H1 (cell line): ENCODE measurements at regions of chrX and their contacts with region 1.

Region 1: DNA sequence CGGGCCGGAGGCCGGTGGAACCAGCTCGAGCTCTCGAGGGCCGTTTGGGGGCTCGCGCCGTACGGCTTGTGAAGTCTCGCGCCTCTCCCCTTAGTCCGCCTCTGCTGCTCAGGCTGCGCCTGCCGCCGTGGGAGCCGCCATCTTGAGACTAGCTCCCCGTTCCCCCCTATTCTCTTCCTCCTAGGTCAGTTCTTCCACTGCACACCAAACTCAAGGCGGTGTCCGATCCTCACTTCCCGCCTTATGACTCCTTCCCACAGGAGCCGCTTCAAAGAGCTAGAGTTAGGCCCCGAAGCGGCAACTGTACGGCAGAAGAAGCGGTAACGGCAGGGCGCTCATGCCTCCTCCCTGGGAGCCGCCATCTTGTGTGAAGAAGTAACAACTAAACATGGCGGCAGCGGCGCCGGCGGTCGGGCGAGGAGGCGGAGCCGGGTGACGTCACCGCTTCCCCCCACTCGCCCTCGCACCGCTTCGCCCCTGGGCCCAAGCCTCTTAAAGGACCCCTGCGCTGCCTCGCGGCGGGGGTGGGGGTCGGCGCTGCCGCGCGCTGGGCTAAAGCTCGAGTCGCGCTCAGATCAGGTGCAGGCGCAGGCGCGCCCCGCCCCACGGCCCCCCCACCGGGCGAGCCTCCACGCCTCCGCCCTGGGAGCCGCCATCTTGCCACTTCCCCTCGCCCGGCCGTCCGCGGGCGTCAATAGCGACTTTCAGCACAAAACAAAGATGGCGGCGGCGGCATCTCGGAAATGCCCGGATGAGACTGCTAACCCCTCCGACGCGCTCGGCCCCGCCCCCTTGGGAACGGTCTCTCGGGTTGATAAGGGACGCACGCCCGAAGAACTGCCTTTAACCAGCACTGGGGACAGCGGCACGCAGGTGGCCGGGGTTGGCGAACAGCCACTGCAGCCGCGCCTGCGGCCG is at the start of gene HCFC1:
- DNase-seq: peak in 1 of 2 experiments; percentile 86
- H3K4me3 ChIP-seq: peak within 1 kb of the TSS; percentile 92 to 99 (median 95)
- H3K27ac ChIP-seq: peak within 1 kb of the TSS; percentile 99
- H3K4me1 ChIP-seq: peaks cover 4 to 24% (median 12%) of the 10 kb centered on the region in 4 experiments
- H3K27me3 ChIP-seq: no peaks in the 10 kb centered on the region
- CTCF ChIP-seq: no peak
- EP300 ChIP-seq: 0 out of 3 replicates have a peak, but pooled peaks of 1 of the 2 experiments have one; percentile 43
- POLR2A ChIP-seq: peak in 1 of 2 experiments; percentile 64; a peak in 2 of 3 replicates
- RAD21 ChIP-seq: no peak
- total RNA-seq, gene HCFC1: 117 and 120 TPM in 2 replicates

Region 2: DNA sequence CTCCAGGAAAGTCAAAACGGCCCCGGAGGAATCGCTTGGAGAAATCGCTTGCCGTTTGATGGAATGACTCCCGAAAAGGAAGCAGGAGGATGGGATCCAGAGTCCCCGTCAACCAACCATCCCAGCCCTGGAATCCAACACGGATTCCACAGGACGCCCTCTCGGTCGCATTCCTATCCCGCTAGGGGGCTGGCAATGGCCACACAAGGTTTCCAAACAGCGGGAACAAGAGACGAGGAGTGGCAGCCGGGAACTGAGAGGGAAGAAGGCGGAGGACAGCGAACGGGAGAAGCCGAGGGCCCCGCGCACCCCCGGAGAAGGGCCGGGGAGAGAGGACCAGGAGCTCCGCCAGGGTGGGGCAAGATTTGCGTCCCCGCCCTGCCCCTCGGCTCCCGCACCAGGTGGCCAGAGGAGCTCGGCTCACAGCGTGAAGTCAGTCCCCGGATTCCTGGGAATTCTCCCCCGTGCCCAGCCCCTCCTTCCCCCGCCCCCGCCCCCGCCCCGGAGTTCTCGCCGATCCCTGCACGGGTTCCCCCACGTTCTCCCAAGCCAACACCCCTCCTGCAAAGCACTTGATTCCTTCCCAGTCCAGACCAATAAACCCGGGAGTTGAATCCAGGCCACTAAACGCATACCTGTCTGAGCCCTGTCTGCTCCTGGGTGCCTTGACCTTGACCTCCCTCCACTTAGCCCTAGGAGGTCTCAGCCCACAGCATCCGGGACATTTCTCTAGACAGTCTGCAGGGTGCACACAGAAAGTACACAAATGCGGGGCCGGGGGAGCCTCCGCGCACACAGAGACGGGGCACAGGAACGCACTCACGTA is 142.8 kb before region 1 on chrX:
- CTCF ChIA-PET with region 1: no interaction called
- POLR2A ChIA-PET with region 1: no interaction called
- DNase-seq: peak in 1 of 2 experiments; percentile 69
- H3K4me3 ChIP-seq: peak overlapping the region; percentile 52 to 78 (median 58)
- H3K27ac ChIP-seq: peak overlapping the region; percentile 29; the same call in 1 of the 2 replicates
- H3K4me1 ChIP-seq: peaks cover 6 to 22% (median 15%) of the 10 kb centered on the region in 4 experiments; a peak in 6 of 7 replicates
- H3K27me3 ChIP-seq: peaks cover 0 to 6% (median 2%) of the 10 kb centered on the region in 4 experiments; a peak in 3 of 7 replicates
- CTCF ChIP-seq: no peak
- EP300 ChIP-seq: no peak
- POLR2A ChIP-seq: no peak
- RAD21 ChIP-seq: no peak

Region 3: GRCh38 chrX:153934473-153935325 is 37.0 kb before region 1 on chrX and contains the start of gene NAA10:
- CTCF ChIA-PET with region 1: interaction called, 3 read pairs
- POLR2A ChIA-PET with region 1: interaction called, 43 read pairs
- DNase-seq: peak in 1 of 2 experiments; percentile 63
- H3K4me3 ChIP-seq: peak within 1 kb of the TSS; percentile 57 to 87 (median 66)
- H3K27ac ChIP-seq: no peak within 1 kb of the TSS
- H3K4me1 ChIP-seq: peaks cover 0 to 5% (median 4%) of the 10 kb centered on the region in 4 experiments; a peak in 5 of 7 replicates
- H3K27me3 ChIP-seq: no peaks in the 10 kb centered on the region
- CTCF ChIP-seq: no peak
- EP300 ChIP-seq: no peak
- POLR2A ChIP-seq: no peak
- RAD21 ChIP-seq: no peak
- total RNA-seq, gene NAA10: 98.1 and 98.8 TPM in 2 replicates

Region 4: DNA sequence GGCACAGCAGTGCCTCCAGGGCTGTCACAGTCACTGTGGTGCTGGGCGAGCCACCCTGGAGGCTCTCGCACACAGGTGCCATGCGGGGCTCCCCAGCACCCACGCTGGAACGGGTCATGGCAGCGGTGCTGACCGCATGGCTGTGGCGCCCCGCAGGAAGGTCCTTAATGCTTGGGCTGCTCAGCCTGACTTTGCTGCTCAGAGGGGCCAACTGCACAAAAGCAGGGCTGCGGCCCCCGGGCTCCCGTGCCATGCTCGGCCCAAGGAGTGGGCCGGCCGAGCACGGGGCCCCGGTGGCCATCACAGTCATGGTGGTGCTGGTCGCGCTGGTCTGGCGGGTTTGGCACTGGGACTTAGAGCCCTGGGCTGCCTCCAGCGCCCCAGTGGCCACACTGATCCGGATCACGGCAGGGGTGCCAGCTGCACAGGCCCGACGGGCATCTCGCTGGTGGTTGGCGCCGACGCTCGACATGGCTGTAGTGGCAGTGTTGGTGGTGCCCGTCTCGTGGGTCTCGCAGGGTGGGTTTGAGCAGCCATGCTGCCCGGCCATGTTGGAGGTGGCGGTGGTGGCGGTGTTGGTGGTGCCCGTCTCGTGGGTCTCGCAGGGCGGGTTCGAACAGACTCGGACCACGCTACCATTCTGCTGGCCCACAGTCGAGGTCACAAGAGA is 17.0 kb before region 1 on chrX:
- CTCF ChIA-PET with region 1: interaction called, 102 read pairs
- POLR2A ChIA-PET with region 1: interaction called, 26 read pairs
- DNase-seq: no peak
- H3K4me3 ChIP-seq: no peak overlapping the region
- H3K27ac ChIP-seq: no peak overlapping the region
- H3K4me1 ChIP-seq: 0 out of 7 replicates have a peak, but pooled peaks cover 0 to 5% (median 0%) of the 10 kb centered on the region in 4 experiments
- H3K27me3 ChIP-seq: no peaks in the 10 kb centered on the region
- CTCF ChIP-seq: no peak
- EP300 ChIP-seq: no peak
- POLR2A ChIP-seq: no peak
- RAD21 ChIP-seq: no peak

Region 5: DNA sequence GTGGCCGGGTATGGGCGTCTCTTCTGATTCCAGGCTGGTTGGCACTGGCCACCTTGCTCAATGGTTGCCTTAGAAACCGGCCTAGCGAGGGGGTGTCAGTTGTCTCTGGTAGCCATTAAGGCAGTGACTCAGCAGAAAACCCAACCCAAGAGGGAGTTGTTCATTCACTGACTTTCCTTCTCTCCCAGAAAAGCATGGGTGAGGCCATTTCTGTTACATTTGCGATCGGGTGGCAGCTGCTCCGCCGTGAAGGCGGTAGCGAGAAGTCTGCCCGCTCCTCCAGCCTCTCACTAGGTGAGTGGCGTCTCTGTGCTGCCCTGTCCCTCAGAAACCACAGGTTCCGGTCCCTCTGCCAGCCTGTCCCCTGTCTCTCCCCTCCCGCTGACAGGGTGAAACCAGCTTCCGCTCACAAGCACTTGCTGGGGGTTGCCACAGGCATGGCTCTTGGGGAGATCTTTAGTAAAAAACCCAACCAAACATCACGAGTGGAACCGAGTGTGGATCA is 30.6 kb after region 1 on chrX:
- CTCF ChIA-PET with region 1: no interaction called
- POLR2A ChIA-PET with region 1: interaction called, 12 read pairs
- DNase-seq: no peak
- H3K4me3 ChIP-seq: no peak overlapping the region
- H3K27ac ChIP-seq: no peak overlapping the region; the same call in 1 of the 2 replicates
- H3K4me1 ChIP-seq: peaks cover 0 to 8% (median 0%) of the 10 kb centered on the region in 4 experiments; a peak in 2 of 7 replicates
- H3K27me3 ChIP-seq: no peaks in the 10 kb centered on the region
- CTCF ChIP-seq: no peak
- EP300 ChIP-seq: no peak
- POLR2A ChIP-seq: no peak
- RAD21 ChIP-seq: no peak